Tibial artery (tissue), 4 donors: ENCODE measurements at regions of chr7 and their contacts with region 1.

Region 1: GRCh38 chr7:5088906-5089305 is 43.2 kb downstream of the RBAK start:
- DNase-seq: peak in 1 of 2 donors; percentile 27
- H3K4me3 ChIP-seq: no peak overlapping the region
- H3K27ac ChIP-seq: no peak overlapping the region
- H3K4me1 ChIP-seq: peaks cover 0 to 7% (median 5%) of the 10 kb centered on the region in 4 donors
- H3K27me3 ChIP-seq: peaks cover 0 to 34% of the 10 kb centered on the region in 2 donors
- CTCF ChIP-seq: no peak

Region 2: GRCh38 chr7:4797858-4798705 is 290.8 kb before region 1 on chr7:
- intact Hi-C with region 1: loop called (anchors 5 kb)
- DNase-seq: no peak
- H3K4me3 ChIP-seq: no peak overlapping the region
- H3K27ac ChIP-seq: no peak overlapping the region
- H3K4me1 ChIP-seq: no peaks in the 10 kb centered on the region
- H3K27me3 ChIP-seq: no peaks in the 10 kb centered on the region
- CTCF ChIP-seq: peak; percentile 85 to 88

Region 3: GRCh38 chr7:4958477-4959301 is 130.2 kb before region 1 on chr7 and contains the start of gene MMD2:
- intact Hi-C with region 1: no loop called
- DNase-seq: no peak
- H3K4me3 ChIP-seq: peak within 1 kb of the TSS; percentile 28 to 49
- H3K27ac ChIP-seq: no peak within 1 kb of the TSS
- H3K4me1 ChIP-seq: peaks cover 0 to 12% (median 11%) of the 10 kb centered on the region in 4 donors
- H3K27me3 ChIP-seq: peaks cover 7 to 80% of the 10 kb centered on the region in 2 donors
- CTCF ChIP-seq: no peak

Region 4: GRCh38 chr7:5266191-5267028 is 177.5 kb after region 1 on chr7:
- intact Hi-C with region 1: no loop called
- DNase-seq: no peak
- H3K4me3 ChIP-seq: no peak overlapping the region
- H3K27ac ChIP-seq: no peak overlapping the region
- H3K4me1 ChIP-seq: no peaks in the 10 kb centered on the region
- H3K27me3 ChIP-seq: peaks cover 0 to 8% of the 10 kb centered on the region in 2 donors
- CTCF ChIP-seq: no peak